CD4-positive, alpha-beta T cell (primary cell): ENCODE measurements at regions of chr13 and their contacts with region 1.

Region 1: GRCh38 chr13:94674609-94675348 is 37.6 kb downstream of the SOX21 start:
- DNase-seq: peak; percentile 10 to 67 (median 38)
- ATAC-seq: no peak
- H3K4me3 ChIP-seq: no peak overlapping the region
- H3K4me3 Mint-ChIP-seq: no peak overlapping the region
- H3K27ac ChIP-seq: no peak overlapping the region
- H3K27ac Mint-ChIP-seq: no peak overlapping the region
- H3K4me1 ChIP-seq: no peaks in the 10 kb centered on the region
- H3K4me1 Mint-ChIP-seq: no peaks in the 10 kb centered on the region
- H3K27me3 ChIP-seq: peaks cover 3 to 6% of the 10 kb centered on the region in 2 experiments
- H3K27me3 Mint-ChIP-seq: peaks cover 34% of the 10 kb centered on the region
- CTCF ChIP-seq: peak; percentile 78

Region 2: GRCh38 chr13:95156208-95156607 is 481.4 kb after region 1 on chr13:
- CTCF ChIA-PET with region 1: no interaction called
- POLR2A ChIA-PET with region 1: no interaction called
- intact Hi-C with region 1: loop called in 1 of 2 experiments (anchors 10 kb)
- DNase-seq: no peak
- ATAC-seq: no peak
- H3K4me3 ChIP-seq: no peak overlapping the region
- H3K4me3 Mint-ChIP-seq: no peak overlapping the region
- H3K27ac ChIP-seq: no peak overlapping the region
- H3K27ac Mint-ChIP-seq: no peak overlapping the region
- H3K4me1 ChIP-seq: no peaks in the 10 kb centered on the region
- H3K4me1 Mint-ChIP-seq: no peaks in the 10 kb centered on the region
- H3K27me3 ChIP-seq: no peaks in the 10 kb centered on the region
- H3K27me3 Mint-ChIP-seq: no peaks in the 10 kb centered on the region
- CTCF ChIP-seq: no peak

Region 3: GRCh38 chr13:95181586-95181985 is 506.8 kb after region 1 on chr13:
- CTCF ChIA-PET with region 1: no interaction called
- POLR2A ChIA-PET with region 1: no interaction called
- intact Hi-C with region 1: loop called in 1 of 2 experiments (anchors 5 kb)
- DNase-seq: no peak
- ATAC-seq: no peak
- H3K4me3 ChIP-seq: no peak overlapping the region
- H3K4me3 Mint-ChIP-seq: no peak overlapping the region
- H3K27ac ChIP-seq: no peak overlapping the region
- H3K27ac Mint-ChIP-seq: peak overlapping the region; percentile 93
- H3K4me1 ChIP-seq: peaks cover 52% of the 10 kb centered on the region
- H3K4me1 Mint-ChIP-seq: peaks cover 91% of the 10 kb centered on the region
- H3K27me3 ChIP-seq: no peaks in the 10 kb centered on the region
- H3K27me3 Mint-ChIP-seq: no peaks in the 10 kb centered on the region
- CTCF ChIP-seq: no peak

Region 4: GRCh38 chr13:95378603-95379002 is 703.8 kb after region 1 on chr13:
- CTCF ChIA-PET with region 1: no interaction called
- POLR2A ChIA-PET with region 1: no interaction called
- intact Hi-C with region 1: loop called in 1 of 2 experiments (anchors 1 kb)
- DNase-seq: no peak
- ATAC-seq: no peak
- H3K4me3 ChIP-seq: no peak overlapping the region
- H3K4me3 Mint-ChIP-seq: no peak overlapping the region
- H3K27ac ChIP-seq: no peak overlapping the region
- H3K27ac Mint-ChIP-seq: no peak overlapping the region
- H3K4me1 ChIP-seq: peaks cover 6% of the 10 kb centered on the region
- H3K4me1 Mint-ChIP-seq: peaks cover 6% of the 10 kb centered on the region
- H3K27me3 ChIP-seq: no peaks in the 10 kb centered on the region
- H3K27me3 Mint-ChIP-seq: peaks cover 6% of the 10 kb centered on the region
- CTCF ChIP-seq: no peak

Region 5: GRCh38 chr13:95403828-95404522 is 729.2 kb after region 1 on chr13:
- CTCF ChIA-PET with region 1: no interaction called
- POLR2A ChIA-PET with region 1: interaction called, 4 read pairs
- intact Hi-C with region 1: loop called in 1 of 2 experiments (anchors 2 kb)
- DNase-seq: peak; percentile 59 to 86 (median 72)
- ATAC-seq: peak; percentile 97
- H3K4me3 ChIP-seq: peak overlapping the region; percentile 62
- H3K4me3 Mint-ChIP-seq: peak overlapping the region; percentile 94
- H3K27ac ChIP-seq: no peak overlapping the region
- H3K27ac Mint-ChIP-seq: no peak overlapping the region
- H3K4me1 ChIP-seq: peaks cover 9% of the 10 kb centered on the region
- H3K4me1 Mint-ChIP-seq: peaks cover 10% of the 10 kb centered on the region
- H3K27me3 ChIP-seq: peaks cover 0 to 5% of the 10 kb centered on the region in 2 experiments
- H3K27me3 Mint-ChIP-seq: peaks cover 4% of the 10 kb centered on the region
- CTCF ChIP-seq: peak; percentile 94

Region 6: DNA sequence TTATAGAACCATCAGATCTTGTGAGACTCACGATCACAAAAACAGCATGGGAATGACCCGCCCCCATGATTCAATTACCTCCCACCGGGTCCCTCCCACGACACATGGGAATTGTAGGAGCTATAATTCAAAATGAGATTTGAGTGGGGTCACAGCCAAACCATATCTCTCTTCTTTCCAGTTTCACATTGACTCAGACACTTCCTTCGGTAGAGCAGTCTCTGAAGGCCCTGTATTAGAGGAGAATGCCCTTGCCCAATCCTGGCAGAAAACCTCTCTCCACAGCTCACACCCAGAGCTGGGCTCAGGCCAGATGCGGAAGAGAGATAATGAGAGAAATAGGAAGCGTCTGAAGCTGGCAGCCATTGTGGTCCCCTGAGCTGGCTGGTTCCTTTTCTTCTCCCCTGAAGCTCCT is 805.4 kb after region 1 on chr13:
- CTCF ChIA-PET with region 1: no interaction called
- POLR2A ChIA-PET with region 1: no interaction called
- intact Hi-C with region 1: loop called (anchors 1 to 5 kb)
- DNase-seq: peak in 3 of 14 experiments; percentile 10 to 59 (median 51)
- ATAC-seq: no peak
- H3K4me3 ChIP-seq: no peak overlapping the region
- H3K4me3 Mint-ChIP-seq: peak overlapping the region; percentile 25
- H3K27ac ChIP-seq: no peak overlapping the region
- H3K27ac Mint-ChIP-seq: no peak overlapping the region
- H3K4me1 ChIP-seq: peaks cover 7% of the 10 kb centered on the region
- H3K4me1 Mint-ChIP-seq: no peaks in the 10 kb centered on the region
- H3K27me3 ChIP-seq: no peaks in the 10 kb centered on the region
- H3K27me3 Mint-ChIP-seq: no peaks in the 10 kb centered on the region
- CTCF ChIP-seq: no peak

Region 7: DNA sequence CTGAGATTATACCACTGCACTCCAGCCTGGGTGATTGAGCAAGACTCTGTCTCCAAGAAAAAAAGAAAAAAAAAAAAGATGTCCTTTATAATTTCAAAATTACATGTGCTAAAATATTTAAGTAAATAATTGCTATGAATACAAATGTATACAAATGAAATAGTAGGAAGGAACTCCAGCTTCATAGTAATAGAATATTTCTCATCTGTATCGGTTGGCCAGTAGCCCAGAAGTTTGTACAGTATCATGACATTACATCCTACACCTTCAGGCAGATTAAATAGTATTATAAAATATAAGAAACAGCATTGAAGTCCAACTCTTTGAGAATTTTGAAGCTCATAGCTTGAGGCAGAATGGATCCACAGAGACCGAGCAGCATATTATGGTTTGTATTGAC is 841.2 kb after region 1 on chr13:
- CTCF ChIA-PET with region 1: no interaction called
- POLR2A ChIA-PET with region 1: no interaction called
- intact Hi-C with region 1: no loop called
- DNase-seq: no peak
- ATAC-seq: no peak
- H3K4me3 ChIP-seq: no peak overlapping the region
- H3K4me3 Mint-ChIP-seq: no peak overlapping the region
- H3K27ac ChIP-seq: no peak overlapping the region
- H3K27ac Mint-ChIP-seq: no peak overlapping the region
- H3K4me1 ChIP-seq: no peaks in the 10 kb centered on the region
- H3K4me1 Mint-ChIP-seq: no peaks in the 10 kb centered on the region
- H3K27me3 ChIP-seq: peaks cover 0 to 4% of the 10 kb centered on the region in 2 experiments
- H3K27me3 Mint-ChIP-seq: peaks cover 28% of the 10 kb centered on the region
- CTCF ChIP-seq: no peak